GM12878 (cell line): ENCODE measurements at regions of chr2 and their contacts with region 1.

Region 1: GRCh38 chr2:196453613-196454047 is 185.9 kb upstream of the CCDC150 start:
- DNase-seq: peak; percentile 72
- ATAC-seq: peak; percentile 90
- H3K4me3 ChIP-seq: no peak overlapping the region
- H3K27ac ChIP-seq: peak overlapping the region; percentile 64
- H3K4me1 ChIP-seq: peaks cover 10% of the 10 kb centered on the region
- H3K27me3 ChIP-seq: no peaks in the 10 kb centered on the region
- CTCF ChIP-seq: peak; percentile 74 to 81 (median 79)
- EP300 ChIP-seq: no peak
- POLR2A ChIP-seq: no peak
- RAD21 ChIP-seq: peak; percentile 99

Region 2: DNA sequence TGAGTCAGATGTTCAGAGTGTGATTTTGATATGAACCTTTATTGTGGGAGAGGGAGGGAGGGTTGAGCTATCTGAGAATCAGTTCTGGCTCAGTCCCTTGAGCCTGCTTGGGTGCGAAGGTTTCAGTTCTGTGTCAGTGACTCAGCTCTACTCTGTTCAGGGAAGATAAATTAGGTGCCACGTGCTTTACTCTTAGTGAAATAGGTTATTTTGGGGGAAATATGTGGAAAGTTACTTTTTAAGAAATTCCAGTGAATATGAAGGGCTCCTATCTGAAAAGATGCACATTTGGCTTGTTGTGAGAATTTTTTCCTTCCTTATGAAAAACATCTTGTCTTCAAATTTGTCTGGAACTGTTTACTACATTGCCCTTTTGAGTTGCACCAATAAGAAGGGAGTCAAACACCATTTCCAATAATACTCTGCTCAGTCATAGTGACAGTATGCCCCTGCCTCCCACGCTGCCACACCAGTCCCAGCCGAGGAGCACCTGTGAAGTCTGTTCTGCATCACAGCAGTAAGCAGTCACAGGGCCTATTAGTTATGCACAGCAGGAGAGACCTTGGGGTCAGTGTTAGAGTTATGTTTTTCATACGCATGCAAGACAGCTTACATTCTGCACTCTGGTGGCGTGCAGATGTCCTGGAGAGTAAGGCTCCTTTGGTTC is 352.2 kb before region 1 on chr2:
- CTCF ChIA-PET with region 1: interaction called, 6 read pairs
- POLR2A ChIA-PET with region 1: no interaction called
- RAD21 ChIA-PET with region 1: interaction called, 10 read pairs
- SMC1A ChIA-PET with region 1: interaction called, 5 read pairs
- in situ Hi-C with region 1: no loop called
- intact Hi-C with region 1: no loop called
- DNase-seq: peak; percentile 80
- ATAC-seq: peak; percentile 96
- H3K4me3 ChIP-seq: no peak overlapping the region
- H3K27ac ChIP-seq: peak overlapping the region; percentile 34
- H3K4me1 ChIP-seq: peaks cover 24% of the 10 kb centered on the region
- H3K27me3 ChIP-seq: no peaks in the 10 kb centered on the region
- CTCF ChIP-seq: peak in 1 of 3 experiments; percentile 14; a peak in 1 of 6 replicates
- EP300 ChIP-seq: peak; percentile 57 to 74
- POLR2A ChIP-seq: 0 out of 2 replicates have a peak, but pooled peaks have one; percentile 16
- RAD21 ChIP-seq: peak; percentile 26; the same call in 1 of the 2 replicates

Region 3: DNA sequence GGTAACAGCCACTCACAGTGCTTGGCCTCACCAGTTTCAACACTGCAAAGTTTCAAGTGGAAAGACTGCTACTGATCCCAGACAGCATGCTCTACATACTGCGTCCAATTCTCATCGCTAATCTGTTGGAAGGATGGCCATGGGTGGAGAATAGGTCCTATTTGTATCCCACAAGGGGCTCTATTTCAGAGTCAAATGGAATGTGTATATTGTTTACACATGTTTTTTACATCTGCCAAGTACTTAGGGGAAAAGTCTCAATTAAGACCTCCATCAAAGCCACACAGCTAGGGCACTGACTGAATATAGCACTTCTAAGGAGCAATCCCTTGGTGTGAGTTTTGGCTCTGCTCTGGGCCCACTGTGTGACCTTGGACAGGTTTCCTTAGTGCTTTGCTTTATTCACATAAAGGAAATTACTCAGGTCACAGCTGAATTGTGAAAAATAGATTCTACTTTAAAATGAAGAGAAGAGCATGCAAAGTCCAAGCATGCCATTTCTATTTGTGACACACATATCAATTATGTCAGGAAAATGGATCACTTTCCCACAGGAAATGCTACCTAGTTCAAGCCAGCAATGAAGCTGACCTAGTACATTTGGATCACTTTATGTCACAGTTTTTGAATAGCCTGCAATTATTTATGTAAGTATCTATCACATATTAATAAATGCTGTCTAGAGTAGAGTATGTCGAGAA is 169.3 kb before region 1 on chr2:
- CTCF ChIA-PET with region 1: interaction called, 30 read pairs
- POLR2A ChIA-PET with region 1: no interaction called
- RAD21 ChIA-PET with region 1: interaction called, 20 read pairs
- SMC1A ChIA-PET with region 1: interaction called, 22 read pairs
- in situ Hi-C with region 1: no loop called
- intact Hi-C with region 1: no loop called
- DNase-seq: no peak
- ATAC-seq: no peak
- H3K4me3 ChIP-seq: no peak overlapping the region
- H3K27ac ChIP-seq: no peak overlapping the region
- H3K4me1 ChIP-seq: peaks cover 21% of the 10 kb centered on the region; the same call in 1 of the 2 replicates
- H3K27me3 ChIP-seq: no peaks in the 10 kb centered on the region
- CTCF ChIP-seq: no peak
- EP300 ChIP-seq: no peak
- POLR2A ChIP-seq: no peak
- RAD21 ChIP-seq: no peak

Region 4: GRCh38 chr2:196337208-196337953 is 116.2 kb before region 1 on chr2:
- CTCF ChIA-PET with region 1: interaction called, 60 read pairs
- POLR2A ChIA-PET with region 1: no interaction called
- RAD21 ChIA-PET with region 1: interaction called, 51 read pairs
- SMC1A ChIA-PET with region 1: interaction called, 46 read pairs
- in situ Hi-C with region 1: no loop called
- intact Hi-C with region 1: no loop called
- DNase-seq: no peak
- ATAC-seq: peak; percentile 67
- H3K4me3 ChIP-seq: no peak overlapping the region
- H3K27ac ChIP-seq: peak overlapping the region; percentile 48
- H3K4me1 ChIP-seq: peaks cover 7% of the 10 kb centered on the region; the same call in 1 of the 2 replicates
- H3K27me3 ChIP-seq: no peaks in the 10 kb centered on the region
- CTCF ChIP-seq: peak in 2 of 3 experiments; percentile 28 to 40; a peak in 3 of 6 replicates
- EP300 ChIP-seq: no peak
- POLR2A ChIP-seq: no peak
- RAD21 ChIP-seq: peak; percentile 52

Region 5: GRCh38 chr2:196390243-196391148 is 63.1 kb before region 1 on chr2:
- CTCF ChIA-PET with region 1: interaction called, 39 read pairs
- POLR2A ChIA-PET with region 1: interaction called, 3 read pairs
- RAD21 ChIA-PET with region 1: interaction called, 15 read pairs
- SMC1A ChIA-PET with region 1: interaction called, 33 read pairs
- in situ Hi-C with region 1: no loop called
- intact Hi-C with region 1: no loop called
- DNase-seq: no peak
- ATAC-seq: peak; percentile 81
- H3K4me3 ChIP-seq: peak overlapping the region; percentile 18; the same call in 1 of the 2 replicates
- H3K27ac ChIP-seq: peak overlapping the region; percentile 38
- H3K4me1 ChIP-seq: peaks cover 22% of the 10 kb centered on the region
- H3K27me3 ChIP-seq: no peaks in the 10 kb centered on the region
- CTCF ChIP-seq: no peak
- EP300 ChIP-seq: no peak
- POLR2A ChIP-seq: no peak
- RAD21 ChIP-seq: no peak

Region 6: DNA sequence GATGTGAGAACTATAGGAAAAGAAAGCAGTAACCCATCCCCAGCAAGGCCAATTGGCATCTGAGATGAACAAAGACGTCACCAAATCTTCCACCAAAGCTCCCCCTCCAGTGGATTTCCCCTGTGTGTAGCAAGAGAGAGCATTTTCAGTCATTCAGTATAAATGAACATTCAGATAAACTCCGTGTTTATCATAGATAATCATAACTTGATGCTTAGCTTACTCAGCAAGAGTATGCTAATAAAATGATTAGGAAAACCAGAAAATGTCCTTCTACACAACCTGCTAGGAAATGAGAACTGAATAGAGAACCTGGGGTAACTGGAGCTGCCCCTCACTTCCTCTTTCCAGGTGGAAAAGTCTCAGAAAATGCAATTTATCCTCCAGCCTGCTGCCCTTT is 12.1 kb before region 1 on chr2:
- CTCF ChIA-PET with region 1: interaction called, 25 read pairs
- POLR2A ChIA-PET with region 1: interaction called, 4 read pairs
- RAD21 ChIA-PET with region 1: interaction called, 32 read pairs
- SMC1A ChIA-PET with region 1: interaction called, 26 read pairs
- in situ Hi-C with region 1: no loop called
- intact Hi-C with region 1: no loop called
- DNase-seq: no peak
- ATAC-seq: peak; percentile 85
- H3K4me3 ChIP-seq: no peak overlapping the region
- H3K27ac ChIP-seq: peak overlapping the region; percentile 54; the same call in 1 of the 2 replicates
- H3K4me1 ChIP-seq: peaks cover 22% of the 10 kb centered on the region
- H3K27me3 ChIP-seq: no peaks in the 10 kb centered on the region
- CTCF ChIP-seq: no peak
- EP300 ChIP-seq: 0 out of 4 replicates have a peak, but pooled peaks of 1 of the 2 experiments have one; percentile 34
- POLR2A ChIP-seq: no peak
- RAD21 ChIP-seq: 0 out of 2 replicates have a peak, but pooled peaks have one; percentile 11

Region 7: DNA sequence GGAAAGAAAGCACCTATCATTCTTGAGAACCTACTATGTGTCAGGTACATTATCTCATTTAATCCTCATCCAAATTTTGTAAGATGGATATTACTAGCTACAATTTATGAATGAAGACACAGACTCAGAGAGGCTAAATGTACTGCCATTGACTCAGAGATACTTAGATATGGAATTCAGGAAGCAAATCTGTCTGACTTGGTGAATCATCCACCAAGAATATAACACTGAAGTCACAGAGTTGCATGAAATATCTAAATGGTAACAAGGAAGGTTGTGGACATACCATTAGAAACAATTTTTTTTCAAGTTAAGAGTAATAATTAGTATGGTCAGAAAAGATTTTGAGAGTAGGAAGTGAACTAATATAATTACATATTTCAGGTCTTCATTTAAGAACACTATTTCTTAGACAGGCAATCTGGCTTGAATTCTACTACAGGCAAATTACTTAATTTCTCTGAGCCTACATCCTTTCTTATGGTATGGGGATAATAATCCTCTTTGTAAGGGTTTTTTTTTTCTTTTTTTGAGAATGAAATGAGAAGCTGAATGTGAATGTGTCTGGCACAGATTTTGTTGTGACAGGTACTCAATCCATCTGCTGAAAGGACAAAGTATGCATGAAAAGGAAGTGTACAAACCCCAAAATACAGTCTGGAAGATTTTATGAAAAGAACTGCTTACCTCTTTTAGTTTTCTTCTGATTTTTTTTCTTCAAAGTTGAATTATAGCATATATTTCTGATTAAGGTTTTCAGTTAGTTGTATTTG is 370.3 kb after region 1 on chr2:
- CTCF ChIA-PET with region 1: no interaction called
- POLR2A ChIA-PET with region 1: no interaction called
- RAD21 ChIA-PET with region 1: no interaction called
- SMC1A ChIA-PET with region 1: no interaction called
- in situ Hi-C with region 1: no loop called
- intact Hi-C with region 1: no loop called
- DNase-seq: no peak
- ATAC-seq: no peak
- H3K4me3 ChIP-seq: no peak overlapping the region
- H3K27ac ChIP-seq: no peak overlapping the region
- H3K4me1 ChIP-seq: no peaks in the 10 kb centered on the region
- H3K27me3 ChIP-seq: no peaks in the 10 kb centered on the region
- CTCF ChIP-seq: no peak
- EP300 ChIP-seq: no peak
- POLR2A ChIP-seq: no peak
- RAD21 ChIP-seq: no peak